B cell (primary cell): ENCODE measurements at regions of chr5 and their contacts with region 1.

Region 1: DNA sequence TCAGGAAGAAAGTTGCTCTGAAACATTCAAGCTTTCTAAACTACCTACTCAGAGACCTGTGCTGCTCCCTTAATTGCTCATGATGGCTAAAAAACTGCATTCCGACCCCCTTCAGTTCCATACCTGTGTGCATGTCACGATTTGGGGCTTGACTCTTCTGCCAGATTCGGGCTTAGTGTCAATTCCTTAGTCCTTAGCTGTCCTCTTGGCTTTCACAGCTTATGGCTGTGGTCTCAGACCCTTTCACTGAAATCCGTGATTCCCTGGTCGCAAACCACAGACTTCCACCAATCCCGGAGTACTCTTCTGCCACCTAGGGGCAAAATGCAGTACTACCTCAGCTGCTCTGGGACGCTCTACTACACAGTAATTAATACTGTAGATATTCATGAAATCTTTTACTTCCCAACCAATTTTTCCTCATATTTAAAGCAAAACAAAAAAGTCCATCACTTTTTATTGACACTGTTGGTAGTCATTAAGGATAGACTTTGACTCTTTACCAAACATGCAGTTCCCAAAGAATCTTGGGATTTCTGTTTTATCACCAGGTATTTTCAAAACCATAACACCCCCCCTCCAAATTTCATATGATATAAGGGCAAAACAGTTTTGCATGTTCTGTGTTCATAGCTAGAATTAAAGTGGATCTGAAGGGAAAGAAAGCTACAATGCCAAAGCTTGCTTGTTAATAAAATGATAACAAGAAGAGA is 617.4 kb downstream of the SLCO4C1 start:
- DNase-seq: peak; percentile 35
- ATAC-seq: peak; percentile 41
- H3K4me3 ChIP-seq: no peak overlapping the region
- H3K4me3 Mint-ChIP-seq: no peak overlapping the region
- H3K27ac ChIP-seq: no peak overlapping the region
- H3K27ac Mint-ChIP-seq: no peak overlapping the region
- H3K4me1 ChIP-seq: no peaks in the 10 kb centered on the region
- H3K4me1 Mint-ChIP-seq: no peaks in the 10 kb centered on the region
- H3K27me3 ChIP-seq: no peaks in the 10 kb centered on the region
- H3K27me3 Mint-ChIP-seq: peaks cover 2% of the 10 kb centered on the region
- CTCF ChIP-seq: peak; percentile 82

Region 2: DNA sequence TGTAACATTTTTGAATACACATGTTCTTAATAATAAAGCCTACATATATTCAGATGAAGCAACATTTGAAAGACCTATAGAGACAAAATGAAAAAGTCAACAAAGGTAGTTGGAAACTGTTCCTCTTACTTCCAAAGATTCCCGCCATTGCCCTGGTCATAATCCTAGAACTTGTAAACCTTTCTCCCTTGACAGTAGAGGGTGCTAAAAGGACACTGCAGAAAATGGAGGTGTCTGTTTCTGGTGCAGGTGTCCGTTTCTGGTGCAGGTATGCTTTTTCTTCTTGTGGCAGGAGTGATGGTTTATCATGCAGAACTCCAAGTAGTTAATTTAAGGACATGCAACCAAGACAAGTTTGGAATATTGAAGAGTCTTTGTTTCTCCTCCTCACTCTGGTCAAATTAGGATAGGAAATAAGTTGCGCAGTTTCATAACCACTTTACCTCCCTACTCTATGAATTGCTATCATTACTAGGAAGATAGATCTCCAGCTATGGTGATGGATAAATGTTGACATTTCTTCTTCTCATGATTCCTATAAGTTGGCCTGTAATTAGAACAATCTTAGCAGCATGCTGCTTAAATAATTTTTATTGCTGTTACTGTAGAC is 1199.5 kb before region 1 on chr5:
- CTCF ChIA-PET with region 1: no interaction called
- POLR2A ChIA-PET with region 1: no interaction called
- intact Hi-C with region 1: loop called (anchors 5 kb)
- DNase-seq: peak; percentile 27
- ATAC-seq: no peak
- H3K4me3 ChIP-seq: no peak overlapping the region
- H3K4me3 Mint-ChIP-seq: no peak overlapping the region
- H3K27ac ChIP-seq: no peak overlapping the region
- H3K27ac Mint-ChIP-seq: no peak overlapping the region
- H3K4me1 ChIP-seq: no peaks in the 10 kb centered on the region
- H3K4me1 Mint-ChIP-seq: no peaks in the 10 kb centered on the region
- H3K27me3 ChIP-seq: no peaks in the 10 kb centered on the region
- H3K27me3 Mint-ChIP-seq: no peaks in the 10 kb centered on the region
- CTCF ChIP-seq: peak; percentile 40

Region 3: DNA sequence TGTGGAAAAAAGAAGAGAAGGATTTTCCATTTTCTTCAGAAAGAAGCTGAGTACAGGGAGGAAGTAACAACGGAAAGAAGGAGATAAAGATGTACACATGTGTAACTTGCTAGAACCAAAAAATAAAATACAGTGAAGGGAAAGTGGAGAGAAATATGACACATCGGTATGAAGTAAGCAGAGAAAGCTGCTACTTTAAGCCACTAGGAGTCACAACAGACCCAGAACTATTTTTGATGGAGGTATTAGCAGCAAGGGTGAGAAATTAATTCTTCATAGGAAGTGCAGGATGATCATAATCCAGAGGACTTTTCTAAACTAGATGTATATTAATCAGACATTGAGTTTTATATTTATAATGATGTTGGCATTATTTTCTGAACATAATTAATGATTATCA is 1054.9 kb before region 1 on chr5:
- CTCF ChIA-PET with region 1: interaction called, 5 read pairs
- POLR2A ChIA-PET with region 1: no interaction called
- intact Hi-C with region 1: loop called (anchors 5 kb)
- DNase-seq: peak; percentile 47
- ATAC-seq: peak; percentile 45
- H3K4me3 ChIP-seq: no peak overlapping the region
- H3K4me3 Mint-ChIP-seq: no peak overlapping the region
- H3K27ac ChIP-seq: no peak overlapping the region
- H3K27ac Mint-ChIP-seq: no peak overlapping the region
- H3K4me1 ChIP-seq: no peaks in the 10 kb centered on the region
- H3K4me1 Mint-ChIP-seq: no peaks in the 10 kb centered on the region
- H3K27me3 ChIP-seq: no peaks in the 10 kb centered on the region
- H3K27me3 Mint-ChIP-seq: peaks cover 3% of the 10 kb centered on the region
- CTCF ChIP-seq: peak; percentile 78

Region 4: GRCh38 chr5:101955891-101956290 is 277.3 kb after region 1 on chr5:
- CTCF ChIA-PET with region 1: no interaction called
- POLR2A ChIA-PET with region 1: no interaction called
- intact Hi-C with region 1: no loop called
- DNase-seq: no peak
- ATAC-seq: no peak
- H3K4me3 ChIP-seq: no peak overlapping the region
- H3K4me3 Mint-ChIP-seq: no peak overlapping the region
- H3K27ac ChIP-seq: no peak overlapping the region
- H3K27ac Mint-ChIP-seq: no peak overlapping the region
- H3K4me1 ChIP-seq: no peaks in the 10 kb centered on the region
- H3K4me1 Mint-ChIP-seq: no peaks in the 10 kb centered on the region
- H3K27me3 ChIP-seq: no peaks in the 10 kb centered on the region
- H3K27me3 Mint-ChIP-seq: no peaks in the 10 kb centered on the region
- CTCF ChIP-seq: no peak